ENCODE measurements at regions of chr6 and their contacts with region 1.

Region 1: GRCh38 chr6:26401987-26402658 is at the start of gene BTN3A1:
- DNase-seq: peak; percentile 27 to 90 (median 43)
- ATAC-seq: peak; percentile 89
- H3K4me3 ChIP-seq: peak within 1 kb of the TSS; percentile 77
- H3K4me3 Mint-ChIP-seq: peak within 1 kb of the TSS; percentile 97
- H3K27ac ChIP-seq: peak within 1 kb of the TSS; percentile 80 to 87
- H3K27ac Mint-ChIP-seq: peak within 1 kb of the TSS; percentile 98
- H3K4me1 ChIP-seq: peaks cover 51% of the 10 kb centered on the region
- H3K4me1 Mint-ChIP-seq: peaks cover 53% of the 10 kb centered on the region
- H3K27me3 ChIP-seq: no peaks in the 10 kb centered on the region
- H3K27me3 Mint-ChIP-seq: no peaks in the 10 kb centered on the region
- CTCF ChIP-seq: no peak
- total RNA-seq, gene BTN3A1: 109 TPM

Region 2: GRCh38 chr6:24867104-24867703 is 1534.9 kb before region 1 on chr6:
- CTCF ChIA-PET with region 1: no interaction called
- POLR2A ChIA-PET with region 1: no interaction called
- intact Hi-C with region 1: loop called in 1 of 2 experiments (anchors 5 kb)
- DNase-seq: peak in 2 of 14 experiments; percentile 34 to 36
- ATAC-seq: no peak
- H3K4me3 ChIP-seq: no peak overlapping the region
- H3K4me3 Mint-ChIP-seq: peak overlapping the region; percentile 46
- H3K27ac ChIP-seq: peak overlapping the region; percentile 28 to 33
- H3K27ac Mint-ChIP-seq: peak overlapping the region; percentile 93
- H3K4me1 ChIP-seq: peaks cover 59% of the 10 kb centered on the region
- H3K4me1 Mint-ChIP-seq: peaks cover 79% of the 10 kb centered on the region
- H3K27me3 ChIP-seq: no peaks in the 10 kb centered on the region
- H3K27me3 Mint-ChIP-seq: no peaks in the 10 kb centered on the region
- CTCF ChIP-seq: peak; percentile 19

Region 3: DNA sequence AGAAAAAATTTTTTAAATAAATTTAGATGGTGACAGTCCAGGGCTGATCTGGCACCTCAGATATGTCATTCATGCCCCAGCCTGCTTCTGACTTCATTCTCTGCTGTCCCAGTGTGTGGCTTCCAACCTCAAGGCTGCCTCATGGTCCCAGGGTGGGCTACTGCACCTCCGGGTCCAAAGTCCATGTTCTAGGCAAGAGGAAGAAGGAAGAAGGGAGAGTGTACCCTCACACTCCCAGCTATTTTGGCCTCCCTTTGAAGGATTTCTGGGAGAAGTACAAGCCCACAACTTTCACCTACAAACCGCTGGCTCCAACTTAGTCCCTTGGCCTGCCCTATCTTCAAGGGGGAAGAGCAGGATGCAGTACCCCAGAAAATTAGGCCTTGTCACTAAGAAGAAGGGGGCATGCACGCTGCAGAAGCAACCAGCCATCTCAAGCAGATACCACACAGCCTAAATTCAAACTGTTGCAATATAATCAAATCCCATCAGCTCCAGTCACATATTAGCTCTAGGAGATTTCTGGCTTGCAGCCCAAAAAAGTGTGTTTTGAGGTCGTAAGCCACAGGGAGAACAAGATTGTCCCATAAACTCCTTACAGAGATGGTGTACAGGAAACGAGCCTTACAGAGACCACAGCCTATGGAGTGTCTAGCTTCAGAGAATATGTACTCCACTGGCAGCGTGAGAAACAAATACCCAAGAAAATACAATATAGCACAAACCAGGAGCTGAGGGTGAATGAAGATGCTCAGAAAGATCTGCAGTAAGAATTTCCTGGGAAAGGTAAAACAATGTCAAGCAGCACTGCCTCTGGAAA is 38.0 kb before region 1 on chr6:
- CTCF ChIA-PET with region 1: no interaction called
- POLR2A ChIA-PET with region 1: no interaction called
- intact Hi-C with region 1: loop called (anchors 1 to 2 kb)
- DNase-seq: peak in 5 of 14 experiments; percentile 4 to 64 (median 47)
- ATAC-seq: peak; percentile 21
- H3K4me3 ChIP-seq: peak overlapping the region; percentile 91
- H3K4me3 Mint-ChIP-seq: no peak overlapping the region
- H3K27ac ChIP-seq: peak overlapping the region; percentile 93 to 94
- H3K27ac Mint-ChIP-seq: no peak overlapping the region
- H3K4me1 ChIP-seq: peaks cover 40% of the 10 kb centered on the region
- H3K4me1 Mint-ChIP-seq: peaks cover 53% of the 10 kb centered on the region
- H3K27me3 ChIP-seq: no peaks in the 10 kb centered on the region
- H3K27me3 Mint-ChIP-seq: no peaks in the 10 kb centered on the region
- CTCF ChIP-seq: no peak

Region 4: DNA sequence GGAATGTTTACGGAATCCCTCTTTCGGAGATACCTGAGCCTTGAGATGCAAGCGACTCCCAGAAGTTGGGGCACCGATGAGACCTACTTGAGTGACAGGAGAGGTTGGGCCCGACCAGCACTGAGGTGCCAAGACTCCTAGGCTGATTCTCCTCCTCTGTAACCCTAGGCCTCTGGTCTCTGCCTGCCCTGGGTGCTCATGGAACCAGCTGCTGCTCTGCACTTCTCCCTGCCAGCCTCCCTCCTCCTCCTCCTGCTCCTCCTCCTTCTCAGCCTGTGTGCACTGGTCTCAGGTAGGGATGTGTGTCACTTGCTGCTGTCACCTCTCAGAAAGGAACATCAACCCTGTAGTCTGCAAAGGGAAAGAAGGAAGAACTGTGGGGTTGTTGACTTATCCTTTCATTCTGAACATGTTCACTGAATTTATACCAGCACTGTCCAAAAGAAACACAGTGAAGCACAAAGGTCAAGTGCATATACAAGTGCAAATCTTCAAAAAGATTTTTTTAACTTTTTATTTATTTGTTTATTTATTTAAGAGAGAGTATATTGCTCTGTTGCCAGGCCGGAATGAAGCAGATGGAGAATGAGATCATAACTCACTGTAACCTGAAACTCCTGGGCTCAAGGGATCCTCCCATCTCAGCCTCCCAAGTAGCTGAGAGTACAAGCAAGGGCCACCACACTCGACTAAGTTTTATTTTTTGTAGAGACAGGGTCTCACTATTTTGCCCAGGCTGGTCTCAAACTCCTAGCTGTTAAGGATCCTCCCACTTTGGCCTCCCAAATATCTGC is 18.3 kb before region 1 on chr6:
- CTCF ChIA-PET with region 1: no interaction called
- POLR2A ChIA-PET with region 1: no interaction called
- intact Hi-C with region 1: loop called (anchors 2 kb)
- DNase-seq: peak in 3 of 14 experiments; percentile 30 to 54 (median 46)
- ATAC-seq: peak; percentile 19
- H3K4me3 ChIP-seq: peak overlapping the region; percentile 92
- H3K4me3 Mint-ChIP-seq: peak overlapping the region; percentile 100
- H3K27ac ChIP-seq: peak overlapping the region; percentile 59 to 68
- H3K27ac Mint-ChIP-seq: peak overlapping the region; percentile 91
- H3K4me1 ChIP-seq: peaks cover 19% of the 10 kb centered on the region
- H3K4me1 Mint-ChIP-seq: peaks cover 30% of the 10 kb centered on the region
- H3K27me3 ChIP-seq: no peaks in the 10 kb centered on the region
- H3K27me3 Mint-ChIP-seq: no peaks in the 10 kb centered on the region
- CTCF ChIP-seq: no peak

Region 5: DNA sequence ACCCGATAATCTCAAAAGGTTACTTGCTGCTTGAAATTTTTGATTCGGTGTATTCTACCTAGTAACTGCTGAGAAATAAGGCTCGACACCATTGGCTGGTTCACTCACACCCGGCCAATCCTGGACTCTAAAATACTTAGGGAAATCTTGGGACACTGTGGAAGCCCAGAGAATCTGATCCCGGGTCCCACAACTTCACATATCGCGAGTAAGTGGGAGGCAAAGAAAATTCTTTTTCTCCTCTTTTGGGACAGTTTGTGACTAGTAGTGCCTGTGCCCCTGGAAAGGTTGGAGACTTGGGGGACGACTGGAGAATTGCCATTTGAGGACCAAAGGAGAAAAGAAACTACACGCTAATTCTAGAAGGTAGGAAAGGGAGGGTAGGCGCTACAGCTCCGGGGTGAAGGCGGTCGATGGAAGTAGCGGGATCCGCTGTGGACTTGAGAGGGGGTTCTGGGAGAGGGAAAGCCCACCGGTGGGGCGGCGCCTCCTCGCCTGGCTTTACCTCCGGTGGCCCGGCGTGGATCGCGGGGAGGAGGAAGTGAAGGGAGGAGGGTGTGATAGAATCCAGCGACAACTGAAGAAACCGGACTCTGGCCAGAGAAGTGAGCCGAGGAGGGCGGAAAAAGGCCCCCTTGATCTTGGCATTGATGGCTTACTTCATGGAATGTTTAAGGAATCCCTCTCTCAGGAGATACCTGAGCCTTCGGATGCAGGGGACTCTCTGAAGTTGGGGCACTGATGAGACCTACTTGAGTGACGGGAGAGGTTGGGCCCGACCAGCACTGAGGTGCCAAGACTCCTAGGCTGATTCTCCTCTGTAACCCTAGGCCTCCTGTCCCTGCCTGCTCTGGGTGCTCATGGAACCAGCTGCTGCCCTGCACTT is 19.4 kb after region 1 on chr6:
- CTCF ChIA-PET with region 1: interaction called, 3 read pairs
- POLR2A ChIA-PET with region 1: no interaction called
- intact Hi-C with region 1: loop called in 1 of 2 experiments (anchors 2 kb)
- DNase-seq: peak in 11 of 14 experiments; percentile 10 to 82 (median 29)
- ATAC-seq: peak; percentile 97
- H3K4me3 ChIP-seq: peak overlapping the region; percentile 93
- H3K4me3 Mint-ChIP-seq: no peak overlapping the region
- H3K27ac ChIP-seq: peak overlapping the region; percentile 36 to 40
- H3K27ac Mint-ChIP-seq: no peak overlapping the region
- H3K4me1 ChIP-seq: peaks cover 15% of the 10 kb centered on the region
- H3K4me1 Mint-ChIP-seq: peaks cover 4% of the 10 kb centered on the region
- H3K27me3 ChIP-seq: no peaks in the 10 kb centered on the region
- H3K27me3 Mint-ChIP-seq: no peaks in the 10 kb centered on the region
- CTCF ChIP-seq: no peak

Region 6: GRCh38 chr6:26439657-26440056 is 37.5 kb after region 1 on chr6:
- CTCF ChIA-PET with region 1: no interaction called
- POLR2A ChIA-PET with region 1: no interaction called
- intact Hi-C with region 1: loop called (anchors 2 to 5 kb)
- DNase-seq: peak in 1 of 14 experiments; percentile 50
- ATAC-seq: no peak
- H3K4me3 ChIP-seq: peak overlapping the region; percentile 89
- H3K4me3 Mint-ChIP-seq: peak overlapping the region; percentile 93
- H3K27ac ChIP-seq: peak overlapping the region; percentile 86 to 95
- H3K27ac Mint-ChIP-seq: peak overlapping the region; percentile 99
- H3K4me1 ChIP-seq: peaks cover 28% of the 10 kb centered on the region
- H3K4me1 Mint-ChIP-seq: peaks cover 54% of the 10 kb centered on the region
- H3K27me3 ChIP-seq: no peaks in the 10 kb centered on the region
- H3K27me3 Mint-ChIP-seq: no peaks in the 10 kb centered on the region
- CTCF ChIP-seq: no peak

Region 7: DNA sequence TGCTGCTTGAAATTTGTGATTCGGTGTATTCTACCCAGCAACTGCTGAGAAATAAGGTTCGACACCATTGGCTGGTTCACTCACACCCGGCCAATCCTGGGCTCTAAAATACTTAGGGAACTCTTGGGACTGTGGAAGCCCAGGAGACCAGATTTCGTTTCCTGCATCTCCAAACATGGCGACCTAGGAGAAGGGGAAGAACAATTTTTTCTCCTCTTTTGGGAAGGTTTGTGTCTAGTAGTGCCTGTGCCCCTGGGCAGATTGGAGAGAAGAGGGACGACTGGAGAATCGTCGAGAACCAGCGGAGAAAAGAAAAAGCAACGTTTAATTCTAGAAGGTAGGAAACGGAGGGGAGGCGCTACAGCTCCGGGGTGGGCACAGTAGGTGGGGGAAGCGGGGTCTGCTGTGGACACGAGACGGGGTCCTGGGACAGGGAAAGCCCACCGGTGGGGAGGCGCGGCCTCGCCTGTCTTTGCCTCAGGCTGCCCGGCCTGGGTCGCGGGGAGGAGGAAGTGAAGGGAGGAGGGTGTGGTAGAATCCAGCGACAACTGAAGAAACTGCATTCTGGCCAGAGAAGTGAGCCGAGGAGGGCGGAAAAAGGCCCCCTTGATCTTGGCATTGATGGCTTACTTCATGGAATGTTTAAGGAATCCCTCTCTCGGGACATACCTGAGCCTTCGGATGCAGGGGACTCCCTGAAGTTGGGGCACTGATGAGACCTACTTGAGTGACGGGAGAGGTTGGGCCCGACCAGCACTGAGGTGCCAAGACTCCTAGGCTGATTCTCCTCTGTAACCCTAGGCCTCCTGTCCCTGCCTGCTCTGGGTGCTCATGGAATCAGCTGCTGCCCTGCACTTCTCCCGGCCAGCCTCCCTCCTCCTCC is 55.9 kb after region 1 on chr6 and contains the start of gene BTN2A1:
- CTCF ChIA-PET with region 1: no interaction called
- POLR2A ChIA-PET with region 1: no interaction called
- intact Hi-C with region 1: loop called in 1 of 2 experiments (anchors 5 kb)
- DNase-seq: peak; percentile 30 to 91 (median 52)
- ATAC-seq: peak; percentile 97
- H3K4me3 ChIP-seq: peak within 1 kb of the TSS; percentile 91
- H3K4me3 Mint-ChIP-seq: peak within 1 kb of the TSS; percentile 98
- H3K27ac ChIP-seq: peak within 1 kb of the TSS; percentile 73 to 91
- H3K27ac Mint-ChIP-seq: peak within 1 kb of the TSS; percentile 92
- H3K4me1 ChIP-seq: peaks cover 44% of the 10 kb centered on the region
- H3K4me1 Mint-ChIP-seq: peaks cover 64% of the 10 kb centered on the region
- H3K27me3 ChIP-seq: no peaks in the 10 kb centered on the region
- H3K27me3 Mint-ChIP-seq: no peaks in the 10 kb centered on the region
- CTCF ChIP-seq: no peak
- total RNA-seq, gene BTN2A1: 16.2 to 17.5 TPM

Measured in CD4-positive, alpha-beta T cell (primary cell).